ENCODE measurements at regions of chr1 and their contacts with region 1.

Region 1: GRCh38 chr1:86194491-86195034 is 38.0 kb upstream of the COL24A1 start:
- DNase-seq: no peak
- H3K4me3 ChIP-seq: no peak overlapping the region
- H3K27ac ChIP-seq: peak overlapping the region in 3 of 4 donors; percentile 46 to 64 (median 46)
- H3K4me1 ChIP-seq: peaks cover 0 to 72% (median 9%) of the 10 kb centered on the region in 4 donors
- H3K27me3 ChIP-seq: no peaks in the 10 kb centered on the region
- CTCF ChIP-seq: no peak
- EP300 ChIP-seq: no peak
- POLR2A ChIP-seq: no peak

Region 2: DNA sequence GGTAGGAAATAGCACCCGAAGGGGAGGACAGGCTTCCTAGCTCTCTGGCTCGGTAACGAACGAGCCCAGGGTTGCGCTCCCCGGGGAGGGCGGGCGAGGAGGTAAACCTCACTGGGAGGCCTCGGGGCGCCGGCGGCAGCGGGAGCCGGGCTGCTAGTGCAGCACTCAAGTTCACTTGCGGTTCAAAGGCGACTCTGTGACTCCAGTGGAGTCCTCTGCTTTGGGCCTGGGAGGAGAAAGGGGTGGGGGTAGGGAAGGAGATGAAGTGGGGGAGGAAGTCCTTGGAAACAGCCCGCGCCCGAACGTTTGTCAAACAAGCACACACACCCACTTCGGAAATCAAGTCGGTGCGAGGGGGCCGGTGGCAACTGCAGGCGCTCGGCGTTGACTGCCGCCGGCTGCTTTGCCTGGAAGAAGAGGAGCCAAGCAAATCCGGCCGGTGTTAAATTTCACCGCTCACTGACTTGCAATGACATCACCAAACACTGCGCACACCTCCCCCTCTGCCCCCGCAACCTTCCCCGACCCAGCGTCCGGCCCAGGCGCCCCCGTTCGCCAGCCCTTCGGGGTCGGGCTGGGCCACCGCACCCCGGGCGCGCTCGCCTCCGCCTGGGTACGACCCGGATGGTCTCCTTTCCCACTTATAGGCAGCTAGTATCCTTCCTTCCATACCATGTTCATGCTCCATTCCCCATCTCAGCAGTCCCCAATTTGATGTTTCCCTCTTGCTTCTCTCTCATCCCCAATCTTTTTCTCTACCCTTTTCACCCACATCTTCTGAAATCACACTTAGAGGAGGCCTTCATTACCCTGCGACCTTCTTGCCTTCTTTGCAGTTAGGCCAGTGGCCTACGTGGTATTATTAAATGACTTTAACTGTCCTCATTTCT is 37.8 kb before region 1 on chr1 and contains the start of gene COL24A1:
- intact Hi-C with region 1: loop called (anchors 2 kb)
- DNase-seq: peak; percentile 84
- H3K4me3 ChIP-seq: peak within 1 kb of the TSS; percentile 29 to 54 (median 44)
- H3K27ac ChIP-seq: peak within 1 kb of the TSS; percentile 76 to 85 (median 78)
- H3K4me1 ChIP-seq: peaks cover 0 to 48% (median 41%) of the 10 kb centered on the region in 4 donors
- H3K27me3 ChIP-seq: no peaks in the 10 kb centered on the region
- CTCF ChIP-seq: no peak
- EP300 ChIP-seq: no peak
- POLR2A ChIP-seq: no peak
- total RNA-seq, gene COL24A1: 5.8 to 8.6 (median 7.8) TPM

Region 3: GRCh38 chr1:86259390-86259789 is 64.8 kb after region 1 on chr1:
- intact Hi-C with region 1: loop called (anchors 5 kb)
- DNase-seq: no peak
- H3K4me3 ChIP-seq: no peak overlapping the region
- H3K27ac ChIP-seq: peak overlapping the region in 1 of 4 donors; percentile 66
- H3K4me1 ChIP-seq: peaks cover 0 to 16% (median 11%) of the 10 kb centered on the region in 4 donors
- H3K27me3 ChIP-seq: no peaks in the 10 kb centered on the region
- CTCF ChIP-seq: no peak
- EP300 ChIP-seq: no peak
- POLR2A ChIP-seq: no peak